Caco-2 (cell line): ENCODE measurements at regions of chr11 and their contacts with region 1.

Region 1: DNA sequence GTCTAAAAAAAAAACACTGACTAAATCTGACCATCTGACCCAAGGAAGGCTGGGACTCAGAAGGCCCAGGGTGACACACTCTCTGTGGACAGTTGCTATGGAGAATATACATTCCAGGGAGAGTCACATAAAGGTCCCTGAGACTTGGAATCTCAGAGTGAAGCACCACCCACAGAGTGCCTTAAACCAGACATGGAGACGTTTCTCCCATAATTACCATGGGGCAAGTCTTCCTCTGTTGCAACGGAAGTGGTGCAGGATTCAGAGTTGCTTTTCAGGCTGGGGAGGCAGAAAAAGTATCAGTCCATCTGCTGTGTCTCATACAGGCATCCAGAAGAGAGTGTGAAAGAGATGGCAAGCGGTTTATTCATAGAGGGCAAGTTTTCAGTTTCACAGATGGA is 58.7 kb upstream of the SLN start:
- DNase-seq: no peak
- H3K4me3 ChIP-seq: no peak overlapping the region
- H3K4me3 Mint-ChIP-seq: no peak overlapping the region
- H3K27ac Mint-ChIP-seq: no peak overlapping the region
- H3K4me1 ChIP-seq: no peaks in the 10 kb centered on the region
- H3K4me1 Mint-ChIP-seq: no peaks in the 10 kb centered on the region
- H3K27me3 ChIP-seq: no peaks in the 10 kb centered on the region
- H3K27me3 Mint-ChIP-seq: peaks cover 13% of the 10 kb centered on the region
- CTCF ChIP-seq: no peak

Region 2: DNA sequence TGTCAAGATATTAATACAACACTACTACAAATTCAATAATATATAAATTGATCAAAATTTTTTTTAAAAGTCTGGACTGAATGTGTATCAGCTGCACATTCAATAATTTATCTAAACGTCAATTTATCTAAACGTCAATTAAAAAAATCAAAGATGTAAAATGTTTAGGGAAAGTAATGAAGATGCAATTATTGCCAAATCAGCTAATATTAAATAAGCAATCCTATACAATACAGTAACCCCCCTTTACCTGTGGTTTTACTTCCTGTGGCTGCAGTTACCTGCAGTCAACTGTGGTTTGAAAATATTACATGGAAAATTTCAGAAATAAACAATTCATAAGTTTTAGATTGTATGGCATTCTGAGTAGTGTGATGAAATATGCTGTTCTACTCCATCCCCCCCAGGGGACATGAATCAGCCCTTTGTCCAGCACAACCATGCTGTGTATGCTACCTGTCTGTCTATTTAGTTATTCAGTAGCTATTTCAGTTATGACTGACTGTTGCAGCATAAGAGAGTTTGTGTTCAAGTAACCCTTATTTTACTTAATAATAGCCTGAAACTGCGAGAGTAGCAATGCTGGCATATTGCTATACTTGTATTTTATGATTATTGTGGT is 385.1 kb before region 1 on chr11:
- CTCF ChIA-PET with region 1: no interaction called
- POLR2A ChIA-PET with region 1: no interaction called
- intact Hi-C with region 1: no loop called
- DNase-seq: peak in 1 of 2 experiments; percentile 27
- H3K4me3 ChIP-seq: no peak overlapping the region
- H3K4me3 Mint-ChIP-seq: no peak overlapping the region
- H3K27ac Mint-ChIP-seq: no peak overlapping the region
- H3K4me1 ChIP-seq: no peaks in the 10 kb centered on the region
- H3K4me1 Mint-ChIP-seq: no peaks in the 10 kb centered on the region
- H3K27me3 ChIP-seq: no peaks in the 10 kb centered on the region
- H3K27me3 Mint-ChIP-seq: no peaks in the 10 kb centered on the region
- CTCF ChIP-seq: no peak

Region 3: GRCh38 chr11:107549253-107549953 is 221.1 kb before region 1 on chr11:
- CTCF ChIA-PET with region 1: interaction called, 4 read pairs
- POLR2A ChIA-PET with region 1: no interaction called
- intact Hi-C with region 1: loop called (anchors 1 kb)
- DNase-seq: peak in 1 of 2 experiments; percentile 50
- H3K4me3 ChIP-seq: no peak overlapping the region
- H3K4me3 Mint-ChIP-seq: no peak overlapping the region
- H3K27ac Mint-ChIP-seq: no peak overlapping the region
- H3K4me1 ChIP-seq: 0 out of 2 replicates have a peak, but pooled peaks cover 8% of the 10 kb centered on the region
- H3K4me1 Mint-ChIP-seq: peaks cover 7% of the 10 kb centered on the region
- H3K27me3 ChIP-seq: no peaks in the 10 kb centered on the region
- H3K27me3 Mint-ChIP-seq: no peaks in the 10 kb centered on the region
- CTCF ChIP-seq: peak; percentile 88 to 94

Region 4: DNA sequence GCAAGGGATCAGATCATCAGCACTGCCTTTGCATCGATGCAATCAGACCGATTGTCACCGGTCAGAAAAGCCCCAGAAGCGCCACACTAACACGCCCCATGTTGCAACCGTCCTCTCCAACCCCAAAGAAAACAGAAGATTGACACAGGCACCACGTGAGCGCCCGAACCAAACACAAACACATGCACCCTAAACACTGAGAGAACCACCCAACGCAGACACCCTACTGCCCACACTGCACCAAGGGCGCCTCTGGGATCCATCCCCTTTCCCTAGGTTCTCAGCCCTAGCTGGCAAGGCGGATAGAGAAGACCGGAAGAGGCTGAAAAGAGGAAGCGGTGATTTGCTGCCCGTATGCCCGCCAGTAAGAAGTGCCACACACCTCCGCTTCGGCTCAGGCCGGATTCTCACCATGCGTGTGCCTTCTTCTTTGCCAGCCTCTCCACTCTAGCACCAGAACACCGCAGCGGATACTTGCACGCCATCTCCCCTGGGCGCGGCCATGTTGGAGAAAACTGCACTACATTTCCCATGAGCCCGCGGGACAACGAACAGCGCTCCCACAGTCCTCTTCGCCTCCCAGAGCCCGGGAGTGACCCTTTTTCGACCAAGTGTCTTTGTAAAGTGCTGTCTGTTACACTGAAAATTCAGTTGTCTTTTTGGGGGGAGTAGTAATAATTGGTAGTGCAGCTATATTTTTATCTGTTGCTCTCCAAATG is 205.2 kb before region 1 on chr11 and contains the start of gene ALKBH8:
- CTCF ChIA-PET with region 1: interaction called, 3 read pairs
- POLR2A ChIA-PET with region 1: no interaction called
- intact Hi-C with region 1: loop called (anchors 1 kb)
- DNase-seq: peak; percentile 83
- H3K4me3 ChIP-seq: peak within 1 kb of the TSS; percentile 63
- H3K4me3 Mint-ChIP-seq: peak within 1 kb of the TSS; percentile 96
- H3K27ac Mint-ChIP-seq: peak within 1 kb of the TSS; percentile 94
- H3K4me1 ChIP-seq: peaks cover 17% of the 10 kb centered on the region
- H3K4me1 Mint-ChIP-seq: peaks cover 13% of the 10 kb centered on the region
- H3K27me3 ChIP-seq: no peaks in the 10 kb centered on the region
- H3K27me3 Mint-ChIP-seq: no peaks in the 10 kb centered on the region
- CTCF ChIP-seq: no peak
- total RNA-seq, gene ALKBH8: 15.7 and 16.8 TPM in 2 replicates

Region 5: GRCh38 chr11:107573438-107573837 is 197.1 kb before region 1 on chr11:
- CTCF ChIA-PET with region 1: no interaction called
- POLR2A ChIA-PET with region 1: no interaction called
- intact Hi-C with region 1: loop called (anchors 1 kb)
- DNase-seq: no peak
- H3K4me3 ChIP-seq: no peak overlapping the region
- H3K4me3 Mint-ChIP-seq: no peak overlapping the region
- H3K27ac Mint-ChIP-seq: no peak overlapping the region
- H3K4me1 ChIP-seq: no peaks in the 10 kb centered on the region
- H3K4me1 Mint-ChIP-seq: no peaks in the 10 kb centered on the region
- H3K27me3 ChIP-seq: peaks cover 1% of the 10 kb centered on the region; the same call in 1 of the 2 replicates
- H3K27me3 Mint-ChIP-seq: peaks cover 9% of the 10 kb centered on the region
- CTCF ChIP-seq: no peak

Region 6: GRCh38 chr11:107741044-107741823 is 29.3 kb before region 1 on chr11:
- CTCF ChIA-PET with region 1: interaction called, 30 read pairs
- POLR2A ChIA-PET with region 1: no interaction called
- intact Hi-C with region 1: loop called (anchors 1 kb)
- DNase-seq: peak in 1 of 2 experiments; percentile 37
- H3K4me3 ChIP-seq: no peak overlapping the region
- H3K4me3 Mint-ChIP-seq: no peak overlapping the region
- H3K27ac Mint-ChIP-seq: no peak overlapping the region
- H3K4me1 ChIP-seq: no peaks in the 10 kb centered on the region
- H3K4me1 Mint-ChIP-seq: no peaks in the 10 kb centered on the region
- H3K27me3 ChIP-seq: no peaks in the 10 kb centered on the region
- H3K27me3 Mint-ChIP-seq: peaks cover 16% of the 10 kb centered on the region
- CTCF ChIP-seq: peak; percentile 82 to 89